H1 (cell line): ENCODE measurements at regions of chr5 and their contacts with region 1.

Region 1: DNA sequence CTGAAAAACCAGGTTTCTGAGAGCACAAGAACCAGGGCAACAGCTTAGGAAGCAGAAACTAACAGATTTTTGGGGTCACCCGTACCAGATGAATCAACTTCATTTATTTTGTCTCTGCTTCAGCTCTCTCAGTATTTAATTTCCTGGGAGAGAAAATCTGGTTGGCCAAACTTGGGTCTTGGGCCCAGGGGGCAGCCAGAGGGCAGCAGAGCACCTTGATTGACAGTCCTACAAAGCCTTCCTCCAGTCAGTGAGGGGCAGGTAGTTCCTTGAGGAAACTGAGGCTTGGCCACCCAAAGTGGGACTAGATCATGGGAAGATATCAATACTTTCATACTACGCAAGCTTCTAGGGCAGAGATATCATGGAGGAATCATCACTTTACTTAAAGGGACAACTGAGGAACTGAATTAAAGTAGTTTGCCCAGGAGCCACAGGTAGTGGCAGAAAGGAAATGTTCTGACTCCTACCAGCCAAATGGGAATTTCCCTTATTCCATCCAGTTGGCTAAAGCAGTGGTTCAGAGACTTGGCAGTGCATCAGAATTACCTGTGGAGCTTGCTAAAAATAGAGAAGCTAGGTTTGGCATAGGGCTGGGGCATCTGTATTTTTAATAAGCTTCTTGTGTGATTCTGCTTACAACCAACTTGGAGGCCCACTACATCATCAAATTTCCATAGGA is 21.5 kb upstream of the ARHGAP26 start:
- DNase-seq: peak in 1 of 2 experiments; percentile 66
- H3K4me3 ChIP-seq: no peak overlapping the region
- H3K27ac ChIP-seq: no peak overlapping the region
- H3K4me1 ChIP-seq: peaks cover 0 to under 1% (median under 1%) of the 10 kb centered on the region in 4 experiments; a peak in 1 of 7 replicates
- H3K27me3 ChIP-seq: no peaks in the 10 kb centered on the region
- CTCF ChIP-seq: peak; percentile 77 to 95 (median 82)
- EP300 ChIP-seq: no peak
- POLR2A ChIP-seq: no peak
- RAD21 ChIP-seq: peak; percentile 94 to 96

Region 2: DNA sequence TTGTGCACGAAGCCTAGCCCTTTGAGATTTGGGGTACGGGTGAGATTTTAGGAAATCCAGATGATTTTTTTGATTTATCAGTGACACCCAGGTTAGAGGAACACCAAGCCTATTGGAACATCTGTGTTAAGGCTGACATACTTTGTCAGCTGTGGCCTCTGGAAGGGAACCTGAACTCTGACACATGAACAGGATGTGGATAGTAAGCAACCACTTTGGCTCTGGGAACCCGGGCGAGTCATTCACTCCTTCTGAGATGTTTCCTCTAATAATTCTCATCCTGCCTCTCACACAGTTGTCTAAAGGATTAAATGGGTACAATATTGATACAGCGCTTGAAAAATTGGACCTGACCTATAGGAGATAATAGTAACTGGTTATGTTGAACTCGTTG is 130.6 kb before region 1 on chr5:
- CTCF ChIA-PET with region 1: no interaction called
- POLR2A ChIA-PET with region 1: no interaction called
- DNase-seq: no peak
- H3K4me3 ChIP-seq: no peak overlapping the region
- H3K27ac ChIP-seq: no peak overlapping the region
- H3K4me1 ChIP-seq: no peaks in the 10 kb centered on the region
- H3K27me3 ChIP-seq: no peaks in the 10 kb centered on the region
- CTCF ChIP-seq: no peak
- EP300 ChIP-seq: no peak
- POLR2A ChIP-seq: no peak
- RAD21 ChIP-seq: no peak

Region 3: DNA sequence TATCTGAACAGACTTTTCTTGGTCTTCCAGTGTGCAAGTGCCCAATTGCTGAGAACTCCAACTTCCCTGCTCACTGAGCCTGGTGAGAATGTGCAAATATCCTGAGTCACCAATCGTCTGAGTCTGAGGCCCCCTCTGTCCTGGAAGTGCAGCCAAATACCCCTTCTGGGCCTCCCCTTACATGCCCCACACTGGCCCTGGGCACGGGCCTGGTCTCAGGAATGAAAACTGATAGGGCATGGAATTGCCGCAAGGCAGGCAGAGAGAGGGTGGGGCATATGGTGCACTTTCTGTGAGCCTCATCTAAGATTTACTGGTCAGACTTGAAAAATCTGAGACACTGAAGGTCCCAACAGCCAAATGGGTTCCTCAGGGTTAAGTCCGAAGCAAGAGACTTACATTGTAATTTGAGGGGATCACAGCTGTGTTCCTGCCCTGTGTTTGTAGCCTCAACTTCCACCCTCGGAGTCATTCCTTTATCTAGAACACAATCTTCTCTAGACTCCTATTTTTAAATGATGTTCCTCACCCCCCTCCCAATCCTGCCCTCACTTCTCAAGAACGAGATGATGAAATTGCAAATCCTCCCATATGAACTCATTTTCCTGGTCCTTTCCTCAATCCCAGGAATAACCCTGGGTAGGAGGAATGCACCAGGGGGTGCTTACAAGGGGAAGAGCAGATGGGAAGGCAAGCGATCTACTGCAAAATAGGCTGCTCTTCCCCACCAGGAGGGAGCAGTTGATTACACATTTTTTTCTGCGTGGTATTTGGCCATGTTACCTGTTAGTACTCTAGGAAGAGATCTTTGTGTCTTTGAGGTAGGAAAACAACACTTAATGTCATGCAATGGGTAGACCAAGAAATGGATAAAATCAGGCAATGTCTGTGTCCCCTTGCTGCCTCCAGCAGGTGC is 13.1 kb before region 1 on chr5:
- CTCF ChIA-PET with region 1: interaction called, 54 read pairs
- POLR2A ChIA-PET with region 1: interaction called, 5 read pairs
- DNase-seq: no peak
- H3K4me3 ChIP-seq: no peak overlapping the region
- H3K27ac ChIP-seq: no peak overlapping the region
- H3K4me1 ChIP-seq: no peaks in the 10 kb centered on the region
- H3K27me3 ChIP-seq: no peaks in the 10 kb centered on the region
- CTCF ChIP-seq: no peak
- EP300 ChIP-seq: no peak
- POLR2A ChIP-seq: no peak
- RAD21 ChIP-seq: no peak

Region 4: DNA sequence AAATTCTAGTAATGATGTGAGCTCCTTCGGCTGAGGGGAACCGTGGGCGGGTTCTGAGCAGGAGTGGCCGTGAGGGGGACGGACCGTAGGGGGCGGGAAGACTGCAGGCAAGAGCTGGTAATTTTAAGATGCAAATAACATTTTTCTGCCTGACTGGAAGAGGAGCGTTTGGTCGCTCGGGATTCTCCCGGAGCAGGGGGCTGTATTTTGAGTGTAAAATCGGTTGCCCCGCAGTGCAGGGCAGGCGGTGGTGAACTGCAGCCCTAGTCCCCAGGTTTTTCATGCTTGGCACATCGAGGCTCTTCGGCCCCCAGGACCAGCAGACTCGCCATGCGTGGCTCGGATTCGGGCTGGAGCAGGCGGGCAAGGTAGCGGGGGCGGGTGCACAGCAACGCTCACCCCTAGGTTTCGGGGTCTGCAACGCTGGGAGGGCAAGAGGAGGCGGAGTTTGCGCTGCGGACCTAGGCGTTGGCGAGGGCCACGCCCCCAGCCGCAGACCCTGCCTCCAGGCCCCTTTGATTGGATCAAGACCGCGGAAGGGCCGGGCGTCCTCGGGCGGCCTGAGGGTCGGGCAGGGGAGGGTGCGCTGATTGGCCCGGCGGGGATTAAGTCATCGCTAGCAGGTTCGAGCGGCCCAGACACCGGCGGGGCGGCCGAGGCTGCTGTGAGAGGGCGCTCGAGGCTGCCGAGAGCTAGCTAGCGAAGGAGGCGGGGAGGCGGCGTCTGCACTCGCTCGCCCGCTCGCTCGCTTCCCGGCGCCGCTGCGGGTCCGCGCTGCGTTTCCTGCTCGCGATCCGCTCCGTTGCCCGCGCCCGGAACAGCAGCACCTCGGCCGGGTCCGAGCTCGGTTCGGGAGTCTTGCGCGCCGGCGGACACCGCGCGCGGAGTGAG is 21.3 kb after region 1 on chr5 and contains the start of gene ARHGAP26:
- CTCF ChIA-PET with region 1: interaction called, 99 read pairs
- POLR2A ChIA-PET with region 1: interaction called, 4 read pairs
- DNase-seq: peak; percentile 93 to 94
- H3K4me3 ChIP-seq: peak within 1 kb of the TSS; percentile 77 to 91 (median 83)
- H3K27ac ChIP-seq: no peak within 1 kb of the TSS; the same call in 1 of the 2 replicates
- H3K4me1 ChIP-seq: peaks cover 0 to 10% (median 5%) of the 10 kb centered on the region in 4 experiments; a peak in 6 of 7 replicates
- H3K27me3 ChIP-seq: peaks cover 0 to 8% (median 2%) of the 10 kb centered on the region in 4 experiments; a peak in 4 of 7 replicates
- CTCF ChIP-seq: peak in 2 of 3 experiments; percentile 16 to 17; a peak in 3 of 4 replicates
- EP300 ChIP-seq: no peak
- POLR2A ChIP-seq: peak; percentile 85 to 87
- RAD21 ChIP-seq: peak; percentile 11 to 25; a peak in 2 of 4 replicates
- total RNA-seq, gene ARHGAP26: 20.6 and 24.8 TPM in 2 replicates

Region 5: GRCh38 chr5:142798099-142798770 is 49.5 kb after region 1 on chr5:
- CTCF ChIA-PET with region 1: interaction called, 15 read pairs
- POLR2A ChIA-PET with region 1: no interaction called
- DNase-seq: no peak
- H3K4me3 ChIP-seq: no peak overlapping the region
- H3K27ac ChIP-seq: no peak overlapping the region
- H3K4me1 ChIP-seq: peaks cover 0 to 12% (median 3%) of the 10 kb centered on the region in 4 experiments; a peak in 4 of 7 replicates
- H3K27me3 ChIP-seq: no peaks in the 10 kb centered on the region
- CTCF ChIP-seq: no peak
- EP300 ChIP-seq: no peak
- POLR2A ChIP-seq: no peak
- RAD21 ChIP-seq: no peak

Region 6: DNA sequence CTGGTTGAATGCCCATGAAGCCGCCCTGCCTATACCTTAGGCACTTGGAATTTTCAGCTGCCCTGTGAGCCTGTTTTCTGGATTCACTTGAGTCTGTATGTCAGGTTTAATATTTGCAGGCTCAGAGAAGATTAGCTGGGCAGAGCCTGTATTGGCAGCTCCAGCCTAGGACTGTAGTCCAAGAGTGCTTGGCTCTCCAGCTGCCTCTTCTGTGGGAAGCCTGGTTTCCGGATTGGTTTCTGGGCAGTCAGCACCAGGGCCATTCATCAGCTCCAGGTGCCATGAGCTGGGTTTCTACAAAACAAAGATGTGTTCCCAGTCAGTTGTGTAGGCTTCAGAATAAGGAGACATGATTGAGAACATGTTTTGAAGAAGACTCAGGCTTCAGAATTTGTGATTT is 111.6 kb after region 1 on chr5:
- CTCF ChIA-PET with region 1: interaction called, 63 read pairs
- POLR2A ChIA-PET with region 1: no interaction called
- DNase-seq: no peak
- H3K4me3 ChIP-seq: no peak overlapping the region
- H3K27ac ChIP-seq: no peak overlapping the region
- H3K4me1 ChIP-seq: peaks cover 15 to 33% (median 20%) of the 10 kb centered on the region in 4 experiments
- H3K27me3 ChIP-seq: no peaks in the 10 kb centered on the region
- CTCF ChIP-seq: no peak
- EP300 ChIP-seq: no peak
- POLR2A ChIP-seq: no peak
- RAD21 ChIP-seq: no peak

Region 7: DNA sequence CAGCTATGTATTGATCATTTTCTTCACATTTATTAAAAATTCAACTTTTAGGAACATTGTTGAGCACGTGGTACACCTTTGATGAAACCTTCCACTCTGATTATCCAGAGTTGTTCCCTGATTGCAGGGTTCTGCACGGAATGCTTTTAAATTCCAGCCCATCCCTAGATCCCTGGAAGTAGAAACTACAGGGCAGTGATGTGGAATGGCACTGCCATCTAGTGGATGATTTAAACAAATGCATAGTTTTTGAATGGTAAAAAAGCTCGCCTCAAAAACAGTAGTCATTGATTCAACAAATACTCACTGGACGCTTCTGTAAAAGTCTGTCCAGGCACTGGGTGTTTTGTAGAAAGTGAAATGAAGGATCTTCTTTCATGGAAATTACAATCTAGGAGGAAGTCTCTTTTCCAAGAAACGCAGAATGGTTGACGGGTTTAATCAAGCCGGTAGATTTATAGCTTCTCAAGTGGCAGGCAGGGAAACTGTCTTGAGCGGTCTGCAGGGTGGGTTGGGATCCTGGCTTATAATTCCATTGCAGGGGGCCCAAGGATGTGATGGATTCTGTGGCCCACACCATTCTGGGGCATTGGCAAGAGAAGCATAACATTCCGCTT is 139.9 kb after region 1 on chr5:
- CTCF ChIA-PET with region 1: interaction called, 632 read pairs
- POLR2A ChIA-PET with region 1: no interaction called
- DNase-seq: no peak
- H3K4me3 ChIP-seq: no peak overlapping the region
- H3K27ac ChIP-seq: no peak overlapping the region
- H3K4me1 ChIP-seq: peaks cover 0 to 11% (median 0%) of the 10 kb centered on the region in 4 experiments; a peak in 1 of 7 replicates
- H3K27me3 ChIP-seq: no peaks in the 10 kb centered on the region
- CTCF ChIP-seq: peak in 2 of 3 experiments; percentile 61 to 69; a peak in 2 of 4 replicates
- EP300 ChIP-seq: no peak
- POLR2A ChIP-seq: no peak
- RAD21 ChIP-seq: peak; percentile 89 to 91

Region 8: GRCh38 chr5:142906863-142907671 is 158.4 kb after region 1 on chr5:
- CTCF ChIA-PET with region 1: interaction called, 89 read pairs
- POLR2A ChIA-PET with region 1: no interaction called
- DNase-seq: no peak
- H3K4me3 ChIP-seq: no peak overlapping the region
- H3K27ac ChIP-seq: no peak overlapping the region
- H3K4me1 ChIP-seq: peaks cover 0 to 6% (median 3%) of the 10 kb centered on the region in 4 experiments; a peak in 3 of 7 replicates
- H3K27me3 ChIP-seq: no peaks in the 10 kb centered on the region
- CTCF ChIP-seq: no peak
- EP300 ChIP-seq: no peak
- POLR2A ChIP-seq: no peak
- RAD21 ChIP-seq: no peak